ENCODE measurements at regions of chr7 and their contacts with region 1.

Region 1: DNA sequence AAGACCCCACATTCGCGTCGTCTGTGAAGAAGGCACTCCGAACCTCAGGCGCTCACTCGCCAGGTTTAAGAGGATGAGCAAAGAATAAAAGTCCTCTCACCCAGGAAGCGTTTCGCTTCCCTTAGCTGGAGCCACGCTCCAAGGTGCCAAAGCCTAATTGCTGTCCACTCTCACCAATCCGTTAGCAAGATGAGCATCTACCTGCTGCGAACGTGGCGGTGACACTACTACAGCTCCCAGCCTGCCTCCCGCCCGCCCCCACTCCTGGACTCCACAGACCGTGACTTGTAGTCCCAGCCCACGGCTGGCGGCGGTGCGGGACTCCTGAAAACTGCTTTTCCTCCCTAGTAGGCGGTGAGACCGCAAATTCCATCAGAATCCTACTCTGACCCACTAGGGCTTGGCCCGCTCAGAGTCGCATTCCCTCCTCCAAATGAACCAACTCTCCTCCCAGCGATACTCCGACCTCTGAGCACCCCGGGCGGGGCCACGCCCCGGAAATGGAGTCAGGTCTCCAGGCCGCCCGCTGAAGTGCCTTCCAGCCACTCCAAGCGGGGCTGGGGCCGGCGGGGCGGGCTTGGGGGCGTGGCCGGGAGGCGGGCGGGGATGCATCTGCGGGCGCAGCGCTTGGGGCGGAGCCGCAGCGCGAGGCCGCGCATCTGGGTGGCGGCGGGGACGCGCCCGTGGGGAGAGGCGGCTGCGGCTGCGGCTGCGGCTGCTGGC is 521 bp upstream of the PTPN12 start:
- DNase-seq: peak; percentile 98 to 99 (median 99)
- ATAC-seq: peak; percentile 92 to 97 (median 94)
- H3K4me3 ChIP-seq: peak overlapping the region; percentile 75 to 100 (median 97)
- H3K27ac ChIP-seq: peak overlapping the region; percentile 98 to 100 (median 98)
- H3K4me1 ChIP-seq: peaks cover 5 to 36% (median 24%) of the 10 kb centered on the region in 12 donors
- H3K27me3 ChIP-seq: no peaks in the 10 kb centered on the region
- CTCF ChIP-seq: no peak
- POLR2A ChIP-seq: peak; percentile 96 to 99

Region 2: GRCh38 chr7:77351539-77352004 is 185.0 kb before region 1 on chr7:
- intact Hi-C with region 1: loop called in 3 of 10 experiments (anchors 5 to 10 kb)
- DNase-seq: peak in 4 of 5 donors; percentile 32 to 57 (median 42)
- ATAC-seq: peak; percentile 38 to 88 (median 70)
- H3K4me3 ChIP-seq: no peak overlapping the region
- H3K27ac ChIP-seq: peak overlapping the region in 10 of 12 donors; percentile 7 to 70 (median 50)
- H3K4me1 ChIP-seq: peaks cover 0 to 63% (median 23%) of the 10 kb centered on the region in 12 donors
- H3K27me3 ChIP-seq: no peaks in the 10 kb centered on the region
- CTCF ChIP-seq: no peak
- POLR2A ChIP-seq: no peak

Region 3: DNA sequence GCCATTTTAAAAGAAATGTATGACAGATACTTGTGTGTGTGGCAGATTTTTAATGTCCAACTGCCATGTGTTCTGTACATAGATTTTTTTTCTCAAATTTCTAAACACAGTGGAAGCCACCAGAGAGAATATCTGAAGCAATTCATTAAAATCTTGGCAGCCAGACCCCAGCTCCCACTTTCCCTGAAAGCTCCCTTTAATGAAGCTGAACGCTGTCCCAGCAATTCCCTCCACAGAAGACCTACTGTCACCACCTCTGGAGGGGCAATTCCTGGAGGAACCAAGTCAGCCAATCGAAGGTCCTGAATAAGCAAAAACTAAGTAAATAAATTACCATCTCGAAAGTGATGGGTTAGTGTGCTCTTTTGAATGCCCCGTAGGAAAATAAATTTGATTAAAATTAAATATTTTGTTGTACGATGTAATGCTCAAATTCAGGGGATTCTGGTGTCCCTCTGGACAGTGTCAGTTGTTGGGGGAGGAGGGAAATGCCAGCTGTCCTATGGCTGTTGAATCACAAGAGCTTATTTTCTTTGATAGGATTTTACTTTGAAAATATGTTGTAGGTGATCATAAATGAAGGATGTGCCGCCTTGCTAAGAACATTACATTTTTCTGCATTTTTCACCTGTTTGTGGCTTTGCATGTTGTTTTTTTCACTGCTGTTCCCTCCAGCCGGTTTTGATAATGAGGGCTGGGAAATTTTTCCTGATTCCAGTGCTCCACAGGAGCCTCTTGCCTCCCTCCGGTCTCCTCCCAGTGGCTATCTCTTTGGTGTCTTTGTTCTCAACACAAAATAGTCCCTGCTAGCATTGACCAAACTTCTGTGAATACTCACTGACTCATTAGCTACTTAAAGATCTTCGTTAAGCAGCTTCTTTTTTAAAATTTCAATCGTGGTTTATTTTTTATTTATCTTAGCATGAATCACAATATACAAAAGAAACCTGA is 111.2 kb before region 1 on chr7:
- intact Hi-C with region 1: loop called in 1 of 10 experiments (anchors 10 kb)
- DNase-seq: no peak
- ATAC-seq: peak in 1 of 4 donors; percentile 23
- H3K4me3 ChIP-seq: peak overlapping the region in 8 of 12 donors; percentile 1 to 33 (median 14)
- H3K27ac ChIP-seq: peak overlapping the region in 2 of 12 donors; percentile 35 to 92
- H3K4me1 ChIP-seq: peaks cover 0 to 62% (median 12%) of the 10 kb centered on the region in 12 donors
- H3K27me3 ChIP-seq: no peaks in the 10 kb centered on the region
- CTCF ChIP-seq: no peak
- POLR2A ChIP-seq: no peak

Region 4: GRCh38 chr7:77570330-77571011 is 33.9 kb after region 1 on chr7:
- intact Hi-C with region 1: loop called in 3 of 10 experiments (anchors 5 kb)
- DNase-seq: no peak
- ATAC-seq: peak in 3 of 4 donors; percentile 53 to 73 (median 68)
- H3K4me3 ChIP-seq: no peak overlapping the region
- H3K27ac ChIP-seq: peak overlapping the region in 1 of 12 donors; percentile 76
- H3K4me1 ChIP-seq: peaks cover 0 to 57% (median 15%) of the 10 kb centered on the region in 12 donors
- H3K27me3 ChIP-seq: no peaks in the 10 kb centered on the region
- CTCF ChIP-seq: no peak
- POLR2A ChIP-seq: no peak

Region 5: GRCh38 chr7:77587272-77587671 is 50.7 kb after region 1 on chr7:
- intact Hi-C with region 1: loop called in 2 of 10 experiments (anchors 5 to 10 kb)
- DNase-seq: no peak
- ATAC-seq: no peak
- H3K4me3 ChIP-seq: no peak overlapping the region
- H3K27ac ChIP-seq: no peak overlapping the region
- H3K4me1 ChIP-seq: peaks cover 0 to 14% (median 7%) of the 10 kb centered on the region in 12 donors
- H3K27me3 ChIP-seq: no peaks in the 10 kb centered on the region
- CTCF ChIP-seq: no peak
- POLR2A ChIP-seq: no peak

Region 6: DNA sequence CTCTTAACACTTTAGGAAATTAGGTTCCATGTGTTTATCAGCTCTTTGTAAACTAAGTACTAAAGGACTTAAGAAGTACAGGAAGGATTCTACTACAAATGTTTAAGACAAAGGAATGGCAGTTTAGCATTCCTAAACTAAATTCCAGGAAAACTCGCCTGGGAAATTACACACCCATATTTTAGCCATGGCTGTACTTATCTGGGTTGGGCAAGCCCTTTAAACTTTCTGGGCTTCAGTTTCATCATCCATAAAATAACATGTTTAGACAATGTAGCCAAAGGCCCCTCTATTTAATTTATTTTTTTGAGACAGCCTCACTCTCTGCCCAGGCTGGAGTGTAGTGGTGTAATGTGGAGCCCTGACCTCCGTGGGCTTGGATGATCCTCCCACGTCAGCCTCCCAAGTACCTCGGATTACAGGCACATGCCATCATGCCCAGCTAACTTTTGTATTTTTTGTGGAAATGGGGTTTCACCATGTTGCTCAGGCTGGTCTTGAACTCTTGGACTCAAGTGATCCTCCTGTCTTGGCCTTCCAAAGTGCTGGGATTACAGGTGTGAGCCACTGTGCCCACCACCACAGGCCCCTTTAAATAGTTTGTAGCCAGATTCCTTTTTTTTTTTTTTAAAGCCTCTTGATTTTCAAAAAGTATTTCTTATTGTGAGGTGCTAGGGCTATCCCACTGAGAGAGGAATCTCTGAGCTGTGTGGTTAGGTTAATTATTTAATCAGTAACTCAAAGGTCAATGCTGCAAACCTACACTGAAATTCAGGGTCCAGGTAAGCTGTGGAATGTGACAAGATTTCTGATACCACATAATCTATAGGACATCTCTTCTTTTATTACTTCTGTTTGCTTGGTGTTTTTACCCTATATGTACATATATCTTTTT is 229.6 kb after region 1 on chr7:
- intact Hi-C with region 1: loop called in 1 of 10 experiments (anchors 10 kb)
- DNase-seq: no peak
- ATAC-seq: no peak
- H3K4me3 ChIP-seq: no peak overlapping the region
- H3K27ac ChIP-seq: no peak overlapping the region
- H3K4me1 ChIP-seq: peaks cover 0 to 22% (median 2%) of the 10 kb centered on the region in 12 donors
- H3K27me3 ChIP-seq: no peaks in the 10 kb centered on the region
- CTCF ChIP-seq: no peak
- POLR2A ChIP-seq: no peak